ENCODE measurements at regions of chr22 and their contacts with region 1.

Region 1: DNA sequence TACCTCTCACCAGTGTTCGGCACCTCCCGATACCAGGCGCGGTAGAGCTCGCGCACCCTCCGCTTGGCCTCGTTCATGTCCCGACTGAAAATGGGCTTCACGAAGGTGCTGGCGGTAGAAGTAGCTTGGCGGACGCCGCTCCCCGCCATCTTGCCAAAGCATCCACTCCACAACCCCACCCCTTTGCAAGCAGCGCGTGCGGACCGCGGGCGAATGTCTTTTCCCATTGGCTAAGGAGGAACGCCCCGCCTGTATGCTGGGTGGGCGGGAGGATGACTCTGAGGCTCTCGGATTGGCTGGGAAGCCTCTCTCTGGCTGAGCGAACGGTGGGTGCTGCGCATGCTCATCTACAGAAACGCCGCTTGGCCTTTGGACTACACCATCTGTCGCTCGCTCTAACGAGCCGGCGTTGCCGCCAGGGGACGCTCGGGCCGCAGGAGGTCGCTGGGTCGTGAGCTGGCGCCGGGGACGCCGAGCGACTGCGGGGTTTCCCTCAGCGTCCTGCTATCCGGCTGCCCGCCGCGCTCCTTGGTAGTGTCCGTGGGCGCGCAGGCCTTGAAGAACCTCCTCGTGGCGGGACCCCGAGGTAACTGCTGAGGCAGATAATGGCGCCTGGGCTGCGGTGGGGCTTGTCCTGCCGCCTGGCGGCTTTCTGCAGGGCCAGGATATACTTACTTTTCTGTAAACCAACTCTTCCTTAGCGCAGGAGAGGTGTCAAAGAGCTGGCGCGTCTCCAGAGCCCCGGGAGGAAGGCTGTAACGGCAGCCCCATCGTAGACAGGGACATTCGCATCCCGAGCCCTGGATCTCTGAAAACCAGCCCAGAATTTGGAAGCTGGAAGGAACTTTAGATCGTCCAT is at the start of gene NDUFA6:
- DNase-seq: peak; percentile 99 to 100 (median 100)
- H3K4me3 ChIP-seq: peak within 1 kb of the TSS; percentile 51 to 99 (median 93)
- H3K27ac ChIP-seq: peak within 1 kb of the TSS; percentile 89 to 97
- H3K4me1 ChIP-seq: peaks cover 2 to 21% (median 13%) of the 10 kb centered on the region in 4 experiments
- H3K27me3 ChIP-seq: no peaks in the 10 kb centered on the region

Region 2: GRCh38 chr22:42052765-42053164 is 38.1 kb before region 1 on chr22:
- CTCF ChIA-PET with region 1: no interaction called
- POLR2A ChIA-PET with region 1: no interaction called
- DNase-seq: no peak
- H3K4me3 ChIP-seq: no peak overlapping the region
- H3K27ac ChIP-seq: no peak overlapping the region
- H3K4me1 ChIP-seq: no peaks in the 10 kb centered on the region
- H3K27me3 ChIP-seq: no peaks in the 10 kb centered on the region

Region 3: GRCh38 chr22:42079319-42080251 is 11.2 kb before region 1 on chr22 and contains the start of gene SMDT1:
- CTCF ChIA-PET with region 1: interaction called, 29 read pairs
- POLR2A ChIA-PET with region 1: interaction called, 31 read pairs
- DNase-seq: peak; percentile 98 to 100 (median 99)
- H3K4me3 ChIP-seq: peak within 1 kb of the TSS; percentile 63 to 91 (median 83)
- H3K27ac ChIP-seq: peak within 1 kb of the TSS; percentile 90 to 97
- H3K4me1 ChIP-seq: peaks cover 5 to 25% (median 14%) of the 10 kb centered on the region in 4 experiments
- H3K27me3 ChIP-seq: no peaks in the 10 kb centered on the region

Region 4: GRCh38 chr22:42111798-42112197 is 21.0 kb after region 1 on chr22:
- CTCF ChIA-PET with region 1: interaction called, 18 read pairs
- POLR2A ChIA-PET with region 1: no interaction called
- DNase-seq: no peak
- H3K4me3 ChIP-seq: no peak overlapping the region
- H3K27ac ChIP-seq: no peak overlapping the region
- H3K4me1 ChIP-seq: no peaks in the 10 kb centered on the region
- H3K27me3 ChIP-seq: no peaks in the 10 kb centered on the region